ENCODE measurements at regions of chr14 and their contacts with region 1.

Region 1: DNA sequence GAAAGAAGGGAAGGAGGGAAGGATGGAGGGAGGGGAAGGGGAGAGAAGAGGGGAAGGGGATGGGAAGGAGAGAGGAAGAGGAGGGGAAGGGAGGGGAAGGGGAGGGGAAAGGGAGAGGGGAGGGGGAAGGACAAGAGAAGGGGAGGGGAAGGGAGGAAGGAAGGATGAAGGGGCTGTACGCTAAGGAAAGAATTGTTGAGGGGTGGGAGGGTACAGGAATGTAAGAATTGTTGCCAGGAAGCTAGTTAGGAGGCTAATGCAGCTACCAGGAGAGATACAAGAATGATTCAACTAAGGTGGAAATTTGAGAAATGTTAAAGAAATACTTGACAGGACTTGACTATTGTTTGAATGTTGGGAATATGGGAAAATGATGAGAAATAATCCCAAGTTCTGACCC is 261.2 kb downstream of the DPF3 start:
- DNase-seq: no peak
- ATAC-seq: no peak
- H3K4me3 ChIP-seq: no peak overlapping the region
- H3K4me3 Mint-ChIP-seq: no peak overlapping the region
- H3K27ac ChIP-seq: no peak overlapping the region
- H3K27ac Mint-ChIP-seq: no peak overlapping the region
- H3K4me1 ChIP-seq: no peaks in the 10 kb centered on the region
- H3K4me1 Mint-ChIP-seq: no peaks in the 10 kb centered on the region
- H3K27me3 ChIP-seq: peaks cover 0 to 7% of the 10 kb centered on the region in 2 experiments
- H3K27me3 Mint-ChIP-seq: peaks cover 6 to 13% of the 10 kb centered on the region in 2 donors

Region 2: DNA sequence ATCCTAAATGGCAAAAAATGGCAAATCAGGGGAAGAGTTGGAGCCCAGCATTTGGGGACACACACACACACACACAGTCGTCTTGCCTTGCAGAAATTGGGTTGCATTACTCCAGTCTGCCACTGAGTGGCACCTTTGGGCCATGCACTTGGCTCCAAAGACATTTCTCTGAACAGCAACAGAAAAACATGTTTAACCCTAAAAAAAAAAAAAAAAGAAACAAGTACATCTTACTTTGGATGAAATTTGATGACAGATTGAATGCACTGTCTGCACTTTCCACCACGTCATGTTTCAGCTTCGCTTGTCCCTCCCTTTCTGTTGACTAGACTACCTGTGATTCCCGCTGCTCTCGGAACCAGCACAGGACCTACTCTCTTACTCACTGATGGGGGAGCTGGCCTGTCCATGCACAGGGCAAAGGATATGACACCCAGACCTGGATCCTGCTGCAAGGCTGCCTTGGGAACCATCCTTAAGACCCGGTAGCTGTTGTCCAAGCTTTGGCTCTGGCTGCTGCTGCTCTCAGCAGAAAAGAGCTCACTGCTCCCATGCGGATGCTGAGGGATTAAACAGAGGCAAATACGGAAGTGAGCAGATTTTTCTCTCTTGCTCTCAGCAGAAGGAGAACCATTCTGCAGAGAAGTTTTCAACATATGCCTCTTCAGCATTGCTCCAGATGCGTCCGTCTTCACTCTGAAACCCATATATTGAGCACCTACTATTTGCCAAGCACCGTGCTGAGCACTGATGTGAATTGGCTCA is 115.6 kb before region 1 on chr14:
- CTCF ChIA-PET with region 1: no interaction called
- POLR2A ChIA-PET with region 1: no interaction called
- DNase-seq: peak; percentile 38 to 86 (median 64)
- ATAC-seq: peak; percentile 35 to 65 (median 41)
- H3K4me3 ChIP-seq: no peak overlapping the region
- H3K4me3 Mint-ChIP-seq: peak overlapping the region in 1 of 3 donors; percentile 64
- H3K27ac ChIP-seq: no peak overlapping the region
- H3K27ac Mint-ChIP-seq: peak overlapping the region in 1 of 2 donors; percentile 47
- H3K4me1 ChIP-seq: peaks cover 29 to 37% of the 10 kb centered on the region in 2 experiments
- H3K4me1 Mint-ChIP-seq: peaks cover 34 to 56% (median 40%) of the 10 kb centered on the region in 3 donors
- H3K27me3 ChIP-seq: peaks cover 0 to 15% of the 10 kb centered on the region in 2 experiments
- H3K27me3 Mint-ChIP-seq: peaks cover 0 to 4% of the 10 kb centered on the region in 2 donors

Region 3: DNA sequence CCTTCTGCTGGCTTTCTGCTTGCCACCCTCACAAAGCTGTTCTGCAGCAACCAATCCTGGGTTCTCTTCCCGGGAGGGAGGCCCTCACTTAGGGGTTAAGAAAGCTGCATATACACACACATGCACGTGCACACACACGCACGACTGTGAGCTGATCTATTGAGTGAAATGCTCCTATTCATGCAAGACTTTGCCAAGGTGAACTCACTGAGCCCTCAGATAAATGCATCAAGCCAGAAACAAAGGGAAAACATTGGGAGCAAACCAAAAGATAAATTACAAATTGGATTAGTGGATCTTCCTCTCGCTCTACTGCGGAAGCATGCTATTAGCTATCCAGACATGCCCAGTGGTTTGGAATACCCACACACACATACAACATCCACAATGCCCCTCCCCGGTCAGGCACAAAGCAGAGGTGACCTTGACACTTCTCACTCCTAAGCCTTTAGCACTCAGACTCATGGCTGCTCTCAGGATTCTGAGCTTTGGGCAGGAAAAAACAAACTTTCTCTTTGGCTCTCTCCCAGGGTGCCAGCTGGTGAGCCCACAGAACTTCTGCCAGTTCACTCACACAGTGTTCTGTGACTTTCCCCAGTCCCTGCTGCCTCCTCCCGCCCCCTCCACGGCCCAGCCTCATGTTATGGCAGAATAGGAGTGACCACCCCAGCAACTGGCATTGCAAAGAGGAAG is 58.9 kb before region 1 on chr14:
- CTCF ChIA-PET with region 1: no interaction called
- POLR2A ChIA-PET with region 1: interaction called in 1 of 2 experiments, 11 read pairs
- DNase-seq: no peak
- ATAC-seq: no peak
- H3K4me3 ChIP-seq: no peak overlapping the region
- H3K4me3 Mint-ChIP-seq: no peak overlapping the region
- H3K27ac ChIP-seq: no peak overlapping the region
- H3K27ac Mint-ChIP-seq: no peak overlapping the region
- H3K4me1 ChIP-seq: no peaks in the 10 kb centered on the region
- H3K4me1 Mint-ChIP-seq: no peaks in the 10 kb centered on the region
- H3K27me3 ChIP-seq: no peaks in the 10 kb centered on the region
- H3K27me3 Mint-ChIP-seq: peaks cover 3 to 4% of the 10 kb centered on the region in 2 donors